RWPE1 (cell line): ENCODE measurements at regions of chr12 and their contacts with region 1.

Region 1: GRCh38 chr12:122860346-122861090 is 25.3 kb downstream of the HIP1R start:
- DNase-seq: peak; percentile 60
- H3K27ac ChIP-seq: peak overlapping the region; percentile 95
- CTCF ChIP-seq: peak; percentile 84

Region 2: GRCh38 chr12:122935318-122935717 is 74.8 kb after region 1 on chr12:
- CTCF ChIA-PET with region 1: interaction called, 7 read pairs
- POLR2A ChIA-PET with region 1: interaction called, 10 read pairs
- DNase-seq: no peak
- H3K27ac ChIP-seq: peak overlapping the region; percentile 17
- CTCF ChIP-seq: no peak

Region 3: GRCh38 chr12:122951979-122952892 is 91.7 kb after region 1 on chr12:
- CTCF ChIA-PET with region 1: interaction called, 10 read pairs
- POLR2A ChIA-PET with region 1: no interaction called
- DNase-seq: peak; percentile 72
- H3K27ac ChIP-seq: peak overlapping the region; percentile 99
- CTCF ChIP-seq: peak; percentile 86